ENCODE measurements at regions of chr17 and their contacts with region 1.

Region 1: GRCh38 chr17:13031718-13032350 is 14.0 kb upstream of the ELAC2 start:
- DNase-seq: peak; percentile 18
- H3K4me3 ChIP-seq: no peak overlapping the region
- H3K27ac ChIP-seq: no peak overlapping the region
- H3K4me1 ChIP-seq: no peaks in the 10 kb centered on the region
- H3K27me3 ChIP-seq: no peaks in the 10 kb centered on the region
- CTCF ChIP-seq: peak; percentile 80 to 87
- POLR2A ChIP-seq: no peak

Region 2: GRCh38 chr17:12180644-12181261 is 851.1 kb before region 1 on chr17:
- CTCF ChIA-PET with region 1: interaction called, 14 read pairs
- POLR2A ChIA-PET with region 1: no interaction called
- dilution Hi-C with region 1: no loop called
- intact Hi-C with region 1: no loop called
- DNase-seq: peak; percentile 35
- H3K4me3 ChIP-seq: no peak overlapping the region
- H3K27ac ChIP-seq: no peak overlapping the region
- H3K4me1 ChIP-seq: no peaks in the 10 kb centered on the region
- H3K27me3 ChIP-seq: no peaks in the 10 kb centered on the region
- CTCF ChIP-seq: peak; percentile 48 to 52
- POLR2A ChIP-seq: no peak

Region 3: DNA sequence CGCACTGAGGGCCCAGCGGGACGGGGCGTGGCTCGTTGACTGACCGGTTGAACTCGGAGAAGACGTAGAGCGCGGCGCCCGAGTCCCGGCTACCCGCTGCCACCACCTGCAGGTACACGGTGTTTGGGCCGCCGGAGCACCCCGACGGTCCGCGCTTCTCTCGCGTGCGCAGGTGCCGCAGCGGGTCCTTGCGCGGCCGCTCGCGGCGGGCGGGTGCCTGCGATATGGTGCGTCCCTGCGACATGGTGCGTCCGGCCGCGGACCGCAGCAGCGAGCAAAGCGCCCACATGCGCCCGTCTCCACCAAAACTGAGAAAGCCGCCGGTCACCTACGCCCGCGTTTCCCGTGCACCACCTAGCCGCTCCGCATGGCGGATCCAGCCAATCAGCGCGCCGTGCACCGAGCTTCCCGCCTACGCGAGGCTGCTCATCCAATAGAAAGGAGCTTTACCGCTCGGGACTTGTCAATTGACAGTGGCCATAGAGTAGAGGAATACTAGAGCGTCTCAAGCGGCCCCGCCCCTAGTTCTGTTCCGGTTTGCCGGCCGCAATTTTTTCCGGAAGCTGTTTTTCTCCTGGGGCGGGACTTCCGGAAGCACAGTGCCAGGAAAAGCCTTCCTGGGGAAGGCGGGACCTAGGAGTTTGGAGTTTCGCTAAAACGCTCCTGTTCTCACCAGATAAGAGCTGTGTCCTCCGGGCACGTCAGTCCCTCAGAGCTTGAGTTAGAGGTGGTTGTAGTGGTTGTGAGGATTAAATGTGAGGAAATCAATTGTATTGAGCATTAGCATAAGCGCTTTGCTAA is 14.0 kb before region 1 on chr17 and contains the start of gene ELAC2:
- CTCF ChIA-PET with region 1: interaction called, 93 read pairs
- POLR2A ChIA-PET with region 1: no interaction called
- dilution Hi-C with region 1: no loop called
- intact Hi-C with region 1: loop called (anchors 1 kb)
- DNase-seq: peak; percentile 99
- H3K4me3 ChIP-seq: peak within 1 kb of the TSS; percentile 22 to 88 (median 87)
- H3K27ac ChIP-seq: peak within 1 kb of the TSS; percentile 36
- H3K4me1 ChIP-seq: peaks cover 11% of the 10 kb centered on the region
- H3K27me3 ChIP-seq: no peaks in the 10 kb centered on the region
- CTCF ChIP-seq: no peak
- POLR2A ChIP-seq: peak; percentile 96
- total RNA-seq, gene ELAC2: 64.8 and 71.6 TPM in 2 replicates

Region 4: GRCh38 chr17:13047011-13047606 is 15.3 kb after region 1 on chr17:
- CTCF ChIA-PET with region 1: interaction called, 12 read pairs
- POLR2A ChIA-PET with region 1: no interaction called
- dilution Hi-C with region 1: no loop called
- intact Hi-C with region 1: no loop called
- DNase-seq: no peak
- H3K4me3 ChIP-seq: no peak overlapping the region
- H3K27ac ChIP-seq: no peak overlapping the region
- H3K4me1 ChIP-seq: no peaks in the 10 kb centered on the region
- H3K27me3 ChIP-seq: no peaks in the 10 kb centered on the region
- CTCF ChIP-seq: no peak
- POLR2A ChIP-seq: no peak

Region 5: DNA sequence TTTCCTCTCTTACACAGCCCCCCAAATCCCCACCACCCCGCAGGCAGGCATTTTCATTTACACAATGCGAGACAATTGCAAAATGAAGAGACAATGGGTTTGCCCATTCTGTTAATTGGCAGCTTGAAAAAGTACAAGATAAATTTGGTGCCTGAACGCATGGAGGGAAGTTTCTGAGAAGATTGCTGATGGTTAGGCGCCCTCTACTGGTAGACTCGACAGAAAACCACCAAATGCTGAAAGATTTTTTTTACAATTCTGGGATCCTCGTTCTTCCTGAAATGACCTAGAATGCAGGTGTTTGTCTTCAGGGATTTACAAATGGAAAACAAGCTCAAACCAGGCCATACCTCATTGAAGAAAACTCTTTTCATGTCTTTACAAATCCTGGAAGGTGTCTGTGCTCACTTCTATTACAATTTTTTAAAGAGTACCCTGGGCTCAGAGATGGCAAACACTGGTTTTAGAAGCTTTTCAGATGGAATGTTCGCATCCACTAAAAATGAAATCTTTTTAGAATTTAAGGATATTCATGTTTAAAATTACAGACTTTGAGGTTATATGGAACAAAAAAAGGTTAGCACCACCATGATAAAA is 1894.8 kb after region 1 on chr17:
- CTCF ChIA-PET with region 1: interaction called, 8 read pairs
- POLR2A ChIA-PET with region 1: no interaction called
- dilution Hi-C with region 1: no loop called
- intact Hi-C with region 1: loop called (anchors 5 kb)
- DNase-seq: peak; percentile 38
- H3K4me3 ChIP-seq: no peak overlapping the region
- H3K27ac ChIP-seq: no peak overlapping the region
- H3K4me1 ChIP-seq: no peaks in the 10 kb centered on the region
- H3K27me3 ChIP-seq: no peaks in the 10 kb centered on the region
- CTCF ChIP-seq: peak; percentile 50 to 69
- POLR2A ChIP-seq: no peak